CD4-positive, alpha-beta memory T cell (primary cell): ENCODE measurements at regions of chr22 and their contacts with region 1.

Region 1: DNA sequence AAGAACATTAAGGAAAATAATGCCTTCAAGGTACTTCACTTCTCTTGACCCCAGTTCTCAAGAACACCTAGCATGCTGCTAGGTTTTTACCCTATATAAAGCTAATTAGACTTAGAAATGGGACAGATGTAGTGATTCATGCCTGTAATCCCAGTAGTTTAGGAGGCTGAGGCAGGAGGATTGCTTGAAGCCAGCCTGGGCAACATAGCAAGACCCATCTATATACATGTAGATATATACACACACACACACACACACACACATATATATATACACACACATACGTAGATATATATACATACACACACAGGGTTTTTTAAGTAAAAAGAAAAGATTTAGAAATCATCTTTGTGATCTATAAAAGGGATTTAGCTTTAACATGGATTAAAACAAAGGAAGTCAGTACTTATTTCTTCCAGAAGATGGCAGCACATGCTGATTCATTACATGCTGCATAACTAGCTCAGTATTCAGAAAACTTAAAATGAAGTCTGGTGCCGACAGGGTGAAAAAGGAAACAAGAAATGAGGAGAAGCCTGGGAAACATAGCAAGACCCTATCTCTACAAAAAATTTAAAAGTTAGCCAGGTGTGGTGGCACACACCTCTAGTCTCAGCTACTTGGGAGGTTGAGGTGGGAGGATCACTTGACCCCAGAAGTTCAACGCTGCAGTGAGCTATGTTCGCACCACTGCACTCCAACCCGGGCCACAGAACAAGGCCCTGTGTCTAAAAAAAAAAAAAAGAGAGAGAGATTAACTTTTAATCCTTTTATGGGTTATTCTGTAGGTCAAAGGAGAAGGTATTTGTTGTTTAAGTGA is 28.5 kb upstream of the RBX1 start:
- DNase-seq: peak in 4 of 5 donors; percentile 63 to 72 (median 66)
- H3K4me3 ChIP-seq: no peak overlapping the region
- H3K4me3 Mint-ChIP-seq: peak overlapping the region; percentile 22 to 64 (median 44)
- H3K27ac ChIP-seq: no peak overlapping the region
- H3K27ac Mint-ChIP-seq: peak overlapping the region in 6 of 7 donors; percentile 48 to 84 (median 74)
- H3K4me1 ChIP-seq: peaks cover 4% of the 10 kb centered on the region
- H3K4me1 Mint-ChIP-seq: peaks cover 4 to 6% (median 5%) of the 10 kb centered on the region in 4 donors
- H3K27me3 ChIP-seq: no peaks in the 10 kb centered on the region
- H3K27me3 Mint-ChIP-seq: no peaks in the 10 kb centered on the region

Region 2: GRCh38 chr22:41022470-41023298 is 100.0 kb after region 1 on chr22:
- CTCF ChIA-PET with region 1: interaction called, 8 read pairs
- POLR2A ChIA-PET with region 1: interaction called, 11 read pairs
- intact Hi-C with region 1: no loop called
- DNase-seq: peak; percentile 72 to 82 (median 78)
- H3K4me3 ChIP-seq: peak overlapping the region in 1 of 2 donors; percentile 59
- H3K4me3 Mint-ChIP-seq: peak overlapping the region; percentile 70 to 88 (median 78)
- H3K27ac ChIP-seq: peak overlapping the region; percentile 70
- H3K27ac Mint-ChIP-seq: peak overlapping the region; percentile 38 to 92 (median 89)
- H3K4me1 ChIP-seq: peaks cover 18% of the 10 kb centered on the region
- H3K4me1 Mint-ChIP-seq: peaks cover 8 to 32% (median 15%) of the 10 kb centered on the region in 4 donors
- H3K27me3 ChIP-seq: no peaks in the 10 kb centered on the region
- H3K27me3 Mint-ChIP-seq: no peaks in the 10 kb centered on the region

Region 3: GRCh38 chr22:41123151-41123550 is 200.5 kb after region 1 on chr22:
- CTCF ChIA-PET with region 1: interaction called, 12 read pairs
- POLR2A ChIA-PET with region 1: interaction called, 3 read pairs
- intact Hi-C with region 1: no loop called
- DNase-seq: no peak
- H3K4me3 ChIP-seq: no peak overlapping the region
- H3K4me3 Mint-ChIP-seq: no peak overlapping the region
- H3K27ac ChIP-seq: no peak overlapping the region
- H3K27ac Mint-ChIP-seq: peak overlapping the region in 6 of 7 donors; percentile 1 to 90 (median 20)
- H3K4me1 ChIP-seq: peaks cover 4% of the 10 kb centered on the region
- H3K4me1 Mint-ChIP-seq: peaks cover 30 to 38% (median 32%) of the 10 kb centered on the region in 4 donors
- H3K27me3 ChIP-seq: no peaks in the 10 kb centered on the region
- H3K27me3 Mint-ChIP-seq: no peaks in the 10 kb centered on the region

Region 4: GRCh38 chr22:41140365-41140957 is 217.8 kb after region 1 on chr22:
- CTCF ChIA-PET with region 1: interaction called, 12 read pairs
- POLR2A ChIA-PET with region 1: no interaction called
- intact Hi-C with region 1: no loop called
- DNase-seq: no peak
- H3K4me3 ChIP-seq: no peak overlapping the region
- H3K4me3 Mint-ChIP-seq: no peak overlapping the region
- H3K27ac ChIP-seq: no peak overlapping the region
- H3K27ac Mint-ChIP-seq: no peak overlapping the region
- H3K4me1 ChIP-seq: no peaks in the 10 kb centered on the region
- H3K4me1 Mint-ChIP-seq: peaks cover 0 to 3% (median under 1%) of the 10 kb centered on the region in 4 donors
- H3K27me3 ChIP-seq: no peaks in the 10 kb centered on the region
- H3K27me3 Mint-ChIP-seq: no peaks in the 10 kb centered on the region

Region 5: GRCh38 chr22:41169157-41169556 is 246.5 kb after region 1 on chr22:
- CTCF ChIA-PET with region 1: interaction called, 10 read pairs
- POLR2A ChIA-PET with region 1: no interaction called
- intact Hi-C with region 1: no loop called
- DNase-seq: no peak
- H3K4me3 ChIP-seq: no peak overlapping the region
- H3K4me3 Mint-ChIP-seq: no peak overlapping the region
- H3K27ac ChIP-seq: no peak overlapping the region
- H3K27ac Mint-ChIP-seq: peak overlapping the region in 1 of 7 donors; percentile 44
- H3K4me1 ChIP-seq: no peaks in the 10 kb centered on the region
- H3K4me1 Mint-ChIP-seq: no peaks in the 10 kb centered on the region
- H3K27me3 ChIP-seq: no peaks in the 10 kb centered on the region
- H3K27me3 Mint-ChIP-seq: no peaks in the 10 kb centered on the region

Region 6: DNA sequence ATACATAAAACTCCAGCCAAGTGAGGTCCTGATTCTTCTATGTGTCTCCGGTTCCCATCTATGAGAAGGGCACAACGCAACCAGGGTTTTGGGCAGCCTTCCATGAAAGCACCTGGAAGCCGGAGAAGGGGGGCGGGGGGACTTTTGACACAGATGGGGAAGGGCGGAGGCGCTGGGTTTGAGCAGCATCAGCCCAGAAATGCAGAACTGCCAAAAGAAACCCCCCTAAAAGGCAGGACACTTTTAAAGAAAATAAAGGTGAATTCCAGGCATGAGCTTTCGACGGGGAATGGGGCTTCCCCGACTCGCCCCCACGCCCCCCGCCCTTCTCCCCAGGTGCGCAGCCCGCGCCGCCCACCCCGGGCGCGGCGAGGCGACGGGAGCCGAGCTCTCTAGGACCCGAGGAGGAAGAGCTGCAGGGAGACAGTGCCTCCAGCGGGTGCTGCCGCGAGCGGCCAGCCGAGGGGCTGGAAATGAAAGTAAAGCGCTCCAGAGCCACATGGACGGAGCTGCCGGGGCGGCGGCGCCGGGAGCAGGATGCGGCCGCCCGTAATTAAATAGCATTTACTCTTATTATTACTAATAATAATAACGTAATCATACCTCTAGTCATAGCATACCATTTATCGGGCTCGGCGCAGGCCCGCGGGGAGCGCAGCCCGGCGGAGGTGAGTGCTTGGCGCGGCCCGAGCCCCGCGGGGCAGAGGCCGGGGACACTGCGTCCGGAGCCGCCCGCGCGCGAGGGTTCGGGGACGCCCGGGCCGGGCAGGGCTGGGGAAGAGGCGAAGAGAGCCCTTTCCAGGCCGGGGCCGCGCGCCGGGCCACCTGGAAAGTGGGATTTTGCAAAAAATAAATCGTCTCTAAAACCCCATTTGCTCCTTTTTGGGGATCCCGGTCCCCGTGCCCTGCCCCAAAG is 378.7 kb after region 1 on chr22 and contains the start of gene ZC3H7B:
- CTCF ChIA-PET with region 1: no interaction called
- POLR2A ChIA-PET with region 1: no interaction called
- intact Hi-C with region 1: loop called (anchors 1 kb)
- DNase-seq: peak; percentile 84 to 92 (median 85)
- H3K4me3 ChIP-seq: peak within 1 kb of the TSS; percentile 54 to 76
- H3K4me3 Mint-ChIP-seq: peak within 1 kb of the TSS; percentile 86 to 89 (median 88)
- H3K27ac ChIP-seq: peak within 1 kb of the TSS; percentile 88
- H3K27ac Mint-ChIP-seq: peak within 1 kb of the TSS; percentile 83 to 97 (median 96)
- H3K4me1 ChIP-seq: peaks cover 24% of the 10 kb centered on the region
- H3K4me1 Mint-ChIP-seq: peaks cover 19 to 38% (median 30%) of the 10 kb centered on the region in 4 donors
- H3K27me3 ChIP-seq: no peaks in the 10 kb centered on the region
- H3K27me3 Mint-ChIP-seq: no peaks in the 10 kb centered on the region
- total RNA-seq, gene ZC3H7B: 39.4 to 40.3 TPM